ENCODE measurements at regions of chr6 and their contacts with region 1.

Region 1: DNA sequence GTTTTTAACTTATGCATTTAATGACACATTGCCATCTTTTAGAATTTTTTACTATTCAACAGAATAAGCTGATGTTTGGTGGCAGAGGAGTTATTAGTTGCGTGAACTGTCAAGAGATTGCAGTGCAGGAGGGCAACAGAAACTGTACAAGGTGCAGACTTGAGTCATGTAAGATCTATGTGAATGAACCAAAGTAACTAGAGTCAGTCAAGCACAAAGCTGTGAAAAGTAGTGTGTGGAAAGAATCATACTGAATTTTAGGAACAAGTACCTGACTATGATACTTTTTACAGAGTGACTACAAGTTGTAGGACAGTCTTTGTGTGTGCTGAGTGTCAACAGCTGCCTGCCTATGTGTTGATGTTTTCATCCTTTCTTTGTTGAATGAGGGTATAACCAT is 2.7 kb upstream of the C6orf163 start:
- DNase-seq: no peak
- ATAC-seq: no peak
- H3K4me3 ChIP-seq: no peak overlapping the region
- H3K4me3 Mint-ChIP-seq: no peak overlapping the region
- H3K27ac ChIP-seq: no peak overlapping the region
- H3K27ac Mint-ChIP-seq: no peak overlapping the region
- H3K4me1 ChIP-seq: no peaks in the 10 kb centered on the region
- H3K4me1 Mint-ChIP-seq: no peaks in the 10 kb centered on the region
- H3K27me3 ChIP-seq: no peaks in the 10 kb centered on the region
- H3K27me3 Mint-ChIP-seq: no peaks in the 10 kb centered on the region
- CTCF ChIP-seq: no peak

Region 2: DNA sequence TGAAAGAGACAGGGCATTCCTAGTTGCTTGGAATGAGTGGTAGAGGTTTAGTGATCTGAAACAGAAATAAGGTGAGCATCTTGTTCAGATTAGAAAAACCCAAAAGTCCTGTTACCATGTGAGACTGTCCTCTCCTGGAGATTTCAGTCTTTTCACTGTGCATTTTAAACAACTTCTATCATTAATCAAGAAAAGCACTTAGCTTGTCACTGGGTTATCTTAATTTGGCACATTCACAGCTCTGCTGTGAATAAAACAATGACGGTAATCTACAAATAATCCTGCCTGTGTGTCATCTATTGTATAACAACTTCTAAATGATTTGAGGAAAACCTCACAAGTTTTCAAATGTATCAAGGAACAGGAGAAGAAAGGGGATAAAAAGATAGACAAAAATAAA is 29.0 kb before region 1 on chr6:
- CTCF ChIA-PET with region 1: no interaction called
- POLR2A ChIA-PET with region 1: no interaction called
- intact Hi-C with region 1: no loop called
- DNase-seq: no peak
- ATAC-seq: no peak
- H3K4me3 ChIP-seq: no peak overlapping the region
- H3K4me3 Mint-ChIP-seq: no peak overlapping the region
- H3K27ac ChIP-seq: no peak overlapping the region
- H3K27ac Mint-ChIP-seq: no peak overlapping the region
- H3K4me1 ChIP-seq: no peaks in the 10 kb centered on the region
- H3K4me1 Mint-ChIP-seq: no peaks in the 10 kb centered on the region
- H3K27me3 ChIP-seq: no peaks in the 10 kb centered on the region
- H3K27me3 Mint-ChIP-seq: peaks cover 17% of the 10 kb centered on the region
- CTCF ChIP-seq: no peak

Region 3: DNA sequence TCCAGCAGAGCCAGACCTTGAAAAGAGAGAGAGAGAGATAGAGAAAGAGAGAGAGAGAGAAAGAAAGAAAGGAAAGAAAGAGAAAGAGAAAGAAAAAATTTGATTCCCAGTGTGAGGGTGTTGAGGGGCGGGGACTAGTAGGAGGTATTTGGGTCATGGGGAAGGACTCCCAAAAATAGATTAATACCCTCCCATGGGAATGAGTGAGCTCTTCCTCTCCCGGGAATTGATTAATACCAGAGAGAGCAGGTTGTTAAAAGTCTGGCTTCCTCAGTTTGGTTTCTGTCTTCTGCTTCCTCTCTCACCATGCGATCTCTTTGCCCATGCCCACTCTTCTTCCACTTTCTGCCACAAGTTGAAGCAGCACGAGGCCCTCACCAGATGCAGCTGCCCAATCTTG is 37.0 kb after region 1 on chr6:
- CTCF ChIA-PET with region 1: no interaction called
- POLR2A ChIA-PET with region 1: no interaction called
- intact Hi-C with region 1: loop called in 1 of 2 experiments (anchors 5 kb)
- DNase-seq: no peak
- ATAC-seq: no peak
- H3K4me3 ChIP-seq: no peak overlapping the region
- H3K4me3 Mint-ChIP-seq: no peak overlapping the region
- H3K27ac ChIP-seq: no peak overlapping the region
- H3K27ac Mint-ChIP-seq: no peak overlapping the region
- H3K4me1 ChIP-seq: no peaks in the 10 kb centered on the region
- H3K4me1 Mint-ChIP-seq: no peaks in the 10 kb centered on the region
- H3K27me3 ChIP-seq: no peaks in the 10 kb centered on the region
- H3K27me3 Mint-ChIP-seq: no peaks in the 10 kb centered on the region
- CTCF ChIP-seq: no peak

Measured in CD8-positive, alpha-beta T cell (primary cell).